ENCODE measurements at regions of chr20 and their contacts with region 1.

Region 1: GRCh38 chr20:5933802-5934436 is 16.4 kb downstream of the TRMT6 start:
- DNase-seq: no peak

Region 2: DNA sequence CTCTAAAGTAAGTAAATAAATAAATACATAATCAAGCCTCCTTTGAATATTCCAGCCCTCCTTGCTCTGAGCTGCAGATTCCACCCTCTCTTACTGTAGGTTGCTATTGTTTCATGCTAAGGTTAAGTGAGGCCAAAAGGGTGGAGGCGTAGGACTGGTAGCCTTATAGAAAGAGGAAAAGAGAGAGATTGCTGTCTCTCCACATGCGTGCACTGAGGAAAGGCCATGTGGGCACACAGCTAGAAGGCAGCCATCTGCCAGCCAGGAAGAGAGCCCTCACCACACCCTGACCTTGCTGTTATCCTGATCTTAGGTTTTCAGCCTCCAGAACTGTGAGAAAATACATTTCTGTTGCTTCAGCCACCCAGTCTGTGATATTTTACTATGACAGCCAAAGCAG is 271.1 kb before region 1 on chr20:
- intact Hi-C with region 1: loop called in 1 of 2 experiments (anchors 2 kb)
- DNase-seq: no peak

Region 3: GRCh38 chr20:6295127-6295866 is 361.4 kb after region 1 on chr20:
- intact Hi-C with region 1: loop called in 1 of 2 experiments (anchors 5 kb)
- DNase-seq: no peak

Region 4: DNA sequence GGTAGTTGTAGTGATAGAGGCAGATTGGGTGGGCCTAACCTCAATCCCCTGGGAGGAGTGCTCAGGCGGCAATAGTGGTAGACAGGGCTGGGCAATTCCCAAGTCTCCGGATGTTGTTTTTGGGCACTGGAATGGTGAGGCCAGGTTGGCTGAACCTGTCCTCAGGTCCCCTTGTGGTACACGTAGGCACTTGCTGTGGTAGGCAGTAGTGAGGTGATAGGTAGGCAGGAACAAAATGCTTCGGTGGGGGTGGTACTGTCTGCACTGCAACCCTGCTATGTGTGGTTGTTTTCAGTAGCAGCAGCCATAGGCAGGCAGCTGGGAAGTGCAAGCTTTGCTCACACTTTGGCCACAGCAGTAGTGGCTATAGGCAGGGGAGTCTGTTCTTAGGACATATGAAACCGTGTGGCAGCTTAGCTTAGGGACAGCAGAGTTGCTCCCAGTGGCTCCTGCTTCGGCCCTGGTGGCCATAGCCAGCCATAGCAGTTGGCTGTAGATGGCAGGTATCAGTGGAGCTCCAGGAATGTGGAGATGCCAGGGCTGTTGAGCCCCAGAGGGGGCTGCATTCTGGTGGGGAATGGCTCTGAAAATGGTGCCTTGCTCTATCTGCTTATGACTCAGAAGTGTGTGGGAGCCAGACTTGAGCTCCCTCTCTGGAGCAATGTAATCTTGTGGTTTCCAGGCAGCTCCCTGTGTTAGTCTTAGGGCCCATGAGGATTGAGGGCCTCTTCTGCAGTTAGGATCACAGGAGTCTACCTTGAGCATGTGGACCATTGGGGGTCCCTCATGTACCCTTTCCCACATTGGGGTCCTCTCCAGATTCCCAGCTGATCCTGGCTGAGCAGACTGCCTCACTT is 591.8 kb after region 1 on chr20:
- intact Hi-C with region 1: loop called in 1 of 2 experiments (anchors 10 kb)
- DNase-seq: no peak